CD8-positive, alpha-beta T cell (primary cell): ENCODE measurements at regions of chr22 and their contacts with region 1.

Region 1: DNA sequence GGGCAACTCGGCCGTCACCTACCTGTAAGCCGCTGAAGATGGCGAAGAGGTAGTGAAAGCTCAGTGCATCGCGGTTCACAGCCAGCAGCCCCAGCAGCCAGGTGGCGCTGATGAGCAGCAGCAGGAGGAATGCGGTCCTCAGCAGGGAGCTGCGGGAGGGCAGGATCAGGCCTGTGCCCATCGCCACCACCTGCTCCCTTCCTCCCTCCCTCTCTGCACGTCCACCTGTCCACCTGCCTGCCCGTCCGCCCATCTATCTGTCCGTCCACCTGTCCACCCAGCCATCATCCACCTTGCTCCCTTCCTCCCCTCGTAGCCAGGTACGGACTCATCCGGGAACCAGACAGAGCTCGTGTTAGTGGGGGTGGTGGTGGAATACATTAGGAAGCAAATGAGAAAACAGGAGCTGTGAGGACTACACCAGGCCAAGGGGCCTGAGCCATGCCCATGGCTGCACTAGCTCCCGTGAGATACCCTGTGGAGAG is 32.2 kb downstream of the TRMU start:
- DNase-seq: peak; percentile 45 to 86 (median 72)
- ATAC-seq: peak; percentile 60
- H3K4me3 ChIP-seq: peak overlapping the region; percentile 5 to 55
- H3K4me3 Mint-ChIP-seq: peak overlapping the region; percentile 29
- H3K27ac ChIP-seq: peak overlapping the region in 1 of 2 experiments; percentile 46
- H3K27ac Mint-ChIP-seq: no peak overlapping the region
- H3K4me1 ChIP-seq: peaks cover 40% of the 10 kb centered on the region
- H3K4me1 Mint-ChIP-seq: peaks cover 29% of the 10 kb centered on the region
- H3K27me3 ChIP-seq: peaks cover 0 to 9% of the 10 kb centered on the region in 2 experiments
- H3K27me3 Mint-ChIP-seq: peaks cover 4% of the 10 kb centered on the region
- CTCF ChIP-seq: peak; percentile 82

Region 2: DNA sequence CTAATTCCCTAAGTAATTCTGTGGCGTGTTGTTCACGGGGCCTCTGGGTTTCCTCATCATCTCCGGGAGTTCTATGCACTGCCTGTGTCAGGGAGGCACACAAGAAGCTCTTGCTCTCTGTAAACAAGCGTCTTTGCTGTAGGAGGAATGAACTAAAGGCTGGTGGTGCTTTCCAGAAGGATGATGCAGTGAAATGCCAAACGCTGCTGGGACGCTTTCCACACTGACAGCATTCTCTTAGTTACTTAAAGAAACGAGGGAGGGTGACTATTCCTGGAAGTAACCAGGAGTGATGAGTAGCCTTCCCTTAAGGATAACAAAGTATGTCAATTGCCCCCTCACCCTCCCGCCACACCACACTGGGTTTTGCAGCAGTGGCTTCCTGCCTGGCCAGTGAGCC is 1242.6 kb before region 1 on chr22:
- CTCF ChIA-PET with region 1: no interaction called
- POLR2A ChIA-PET with region 1: no interaction called
- intact Hi-C with region 1: no loop called
- DNase-seq: no peak
- ATAC-seq: no peak
- H3K4me3 ChIP-seq: no peak overlapping the region
- H3K4me3 Mint-ChIP-seq: no peak overlapping the region
- H3K27ac ChIP-seq: no peak overlapping the region
- H3K27ac Mint-ChIP-seq: no peak overlapping the region
- H3K4me1 ChIP-seq: peaks cover 12% of the 10 kb centered on the region
- H3K4me1 Mint-ChIP-seq: peaks cover 14% of the 10 kb centered on the region
- H3K27me3 ChIP-seq: no peaks in the 10 kb centered on the region
- H3K27me3 Mint-ChIP-seq: no peaks in the 10 kb centered on the region
- CTCF ChIP-seq: no peak

Region 3: GRCh38 chr22:46425016-46425415 is 57.3 kb after region 1 on chr22:
- CTCF ChIA-PET with region 1: no interaction called
- POLR2A ChIA-PET with region 1: no interaction called
- intact Hi-C with region 1: no loop called
- DNase-seq: no peak
- ATAC-seq: no peak
- H3K4me3 ChIP-seq: no peak overlapping the region
- H3K4me3 Mint-ChIP-seq: no peak overlapping the region
- H3K27ac ChIP-seq: no peak overlapping the region
- H3K27ac Mint-ChIP-seq: no peak overlapping the region
- H3K4me1 ChIP-seq: no peaks in the 10 kb centered on the region
- H3K4me1 Mint-ChIP-seq: peaks cover 17% of the 10 kb centered on the region
- H3K27me3 ChIP-seq: no peaks in the 10 kb centered on the region
- H3K27me3 Mint-ChIP-seq: no peaks in the 10 kb centered on the region
- CTCF ChIP-seq: no peak

Region 4: DNA sequence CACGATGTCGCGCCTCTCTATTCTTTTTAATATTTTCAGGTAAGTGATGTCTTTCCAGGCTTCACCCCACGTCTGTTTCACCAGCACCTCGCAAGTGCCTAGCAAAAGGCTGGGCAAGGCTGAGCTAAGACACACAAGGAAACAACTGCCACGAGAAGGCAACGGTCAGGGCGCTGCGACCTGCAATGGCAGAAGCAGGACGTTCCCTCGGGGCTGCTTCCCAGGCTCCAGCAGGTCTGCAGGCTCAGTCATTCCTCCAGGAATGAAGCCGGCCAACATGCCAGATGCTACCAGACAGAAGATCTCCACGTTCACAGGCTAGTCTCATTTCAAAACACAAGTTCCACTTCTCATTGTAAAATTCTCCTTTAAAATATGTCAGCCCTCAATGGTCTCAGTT is 124.2 kb after region 1 on chr22:
- CTCF ChIA-PET with region 1: no interaction called
- POLR2A ChIA-PET with region 1: no interaction called
- intact Hi-C with region 1: no loop called
- DNase-seq: no peak
- ATAC-seq: no peak
- H3K4me3 ChIP-seq: no peak overlapping the region
- H3K4me3 Mint-ChIP-seq: no peak overlapping the region
- H3K27ac ChIP-seq: no peak overlapping the region
- H3K27ac Mint-ChIP-seq: no peak overlapping the region
- H3K4me1 ChIP-seq: no peaks in the 10 kb centered on the region
- H3K4me1 Mint-ChIP-seq: no peaks in the 10 kb centered on the region
- H3K27me3 ChIP-seq: no peaks in the 10 kb centered on the region
- H3K27me3 Mint-ChIP-seq: peaks cover 5% of the 10 kb centered on the region
- CTCF ChIP-seq: no peak

Region 5: DNA sequence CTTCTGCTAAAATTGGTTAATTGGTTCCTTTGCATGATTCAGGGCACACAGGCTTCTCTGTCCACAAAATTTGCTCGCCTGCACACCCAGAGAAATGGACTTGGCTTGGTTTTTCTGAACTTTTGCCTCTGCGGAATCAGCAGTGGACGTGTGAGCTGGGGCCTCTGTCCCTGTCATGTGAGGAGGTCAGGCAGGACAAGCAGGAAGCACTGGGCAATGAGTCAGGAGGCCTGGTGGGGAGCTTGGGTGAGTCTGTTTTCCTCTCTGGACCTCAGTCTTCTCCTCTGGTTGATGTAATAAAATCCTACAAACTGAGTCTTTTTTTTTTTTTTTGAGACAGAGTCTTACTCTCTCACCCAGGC is 180.1 kb after region 1 on chr22:
- CTCF ChIA-PET with region 1: interaction called, 57 read pairs
- POLR2A ChIA-PET with region 1: no interaction called
- intact Hi-C with region 1: no loop called
- DNase-seq: no peak
- ATAC-seq: no peak
- H3K4me3 ChIP-seq: no peak overlapping the region
- H3K4me3 Mint-ChIP-seq: no peak overlapping the region
- H3K27ac ChIP-seq: no peak overlapping the region
- H3K27ac Mint-ChIP-seq: no peak overlapping the region
- H3K4me1 ChIP-seq: no peaks in the 10 kb centered on the region
- H3K4me1 Mint-ChIP-seq: no peaks in the 10 kb centered on the region
- H3K27me3 ChIP-seq: no peaks in the 10 kb centered on the region
- H3K27me3 Mint-ChIP-seq: peaks cover 21% of the 10 kb centered on the region
- CTCF ChIP-seq: no peak